Activated naive CD4-positive, alpha-beta T cell treated with anti-CD3 and anti-CD28 coated beads for 36 hours (primary cell): ENCODE measurements at regions of chr12 and their contacts with region 1.

Region 1: GRCh38 chr12:32390572-32391219 is 8.7 kb upstream of the FGD4 start:
- DNase-seq: peak; percentile 47
- H3K4me3 Mint-ChIP-seq: peak overlapping the region; percentile 66
- H3K27ac Mint-ChIP-seq: peak overlapping the region; percentile 7
- H3K4me1 Mint-ChIP-seq: peaks cover 3% of the 10 kb centered on the region
- H3K27me3 Mint-ChIP-seq: peaks cover 17% of the 10 kb centered on the region

Region 2: GRCh38 chr12:32322354-32322753 is 68.3 kb before region 1 on chr12:
- CTCF ChIA-PET with region 1: no interaction called
- intact Hi-C with region 1: loop called (anchors 2 kb)
- DNase-seq: no peak
- H3K4me3 Mint-ChIP-seq: no peak overlapping the region
- H3K27ac Mint-ChIP-seq: no peak overlapping the region
- H3K4me1 Mint-ChIP-seq: no peaks in the 10 kb centered on the region
- H3K27me3 Mint-ChIP-seq: no peaks in the 10 kb centered on the region

Region 3: DNA sequence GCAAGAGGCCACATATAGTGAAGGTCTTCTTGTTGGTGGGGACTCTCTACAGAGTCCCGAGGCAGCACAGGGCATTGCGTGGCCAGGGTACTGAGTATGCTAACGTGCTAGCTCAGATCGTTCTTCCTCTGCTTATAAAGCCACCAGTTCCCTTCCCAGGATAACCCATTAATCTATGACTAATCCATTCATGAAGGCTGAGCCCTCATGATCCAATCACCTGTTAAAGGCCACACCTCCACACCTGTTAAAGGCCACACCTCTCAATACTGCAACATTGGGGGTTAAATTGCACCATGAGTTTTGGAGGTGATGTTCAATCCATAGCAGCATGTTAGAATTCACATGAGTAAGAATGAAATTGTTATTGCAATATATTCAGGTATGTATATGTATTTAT is 377.8 kb after region 1 on chr12:
- CTCF ChIA-PET with region 1: no interaction called
- intact Hi-C with region 1: no loop called
- DNase-seq: no peak
- H3K4me3 Mint-ChIP-seq: no peak overlapping the region
- H3K27ac Mint-ChIP-seq: no peak overlapping the region
- H3K4me1 Mint-ChIP-seq: no peaks in the 10 kb centered on the region
- H3K27me3 Mint-ChIP-seq: peaks cover 5% of the 10 kb centered on the region